ENCODE measurements at regions of chr1 and their contacts with region 1.

Region 1: DNA sequence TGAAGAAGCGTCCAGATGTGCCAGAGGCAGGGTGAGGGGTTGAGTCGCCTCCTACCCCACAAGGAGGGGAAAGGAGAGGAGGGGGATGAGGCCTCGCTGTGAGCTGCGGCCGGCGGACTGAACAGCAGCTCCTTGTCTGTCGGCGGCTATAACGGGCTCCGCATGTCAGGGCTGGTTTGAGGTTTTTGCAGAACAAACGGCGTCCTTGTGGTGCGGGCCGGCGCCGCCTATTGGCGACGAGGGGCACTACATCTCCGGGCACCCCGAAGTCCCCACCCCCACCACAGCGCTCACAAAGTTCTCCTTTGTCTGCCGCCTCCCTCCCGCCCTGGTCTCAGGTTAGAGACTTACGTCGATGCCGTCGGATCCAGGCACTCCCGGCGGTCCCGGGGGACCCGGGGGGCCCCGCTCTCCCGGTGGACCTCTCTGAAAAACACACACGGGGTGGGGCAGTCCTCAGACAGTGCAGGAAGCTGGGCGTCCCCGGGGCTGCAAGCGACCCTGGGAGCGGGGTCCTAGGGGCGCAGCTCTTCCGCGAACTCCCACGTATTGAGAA is 1.8 kb downstream of the COL9A2 start:
- DNase-seq: peak; percentile 90
- H3K4me3 ChIP-seq: peak overlapping the region; percentile 15 to 55 (median 48)
- H3K27ac ChIP-seq: peak overlapping the region in 3 of 4 donors; percentile 37 to 65 (median 50)
- H3K4me1 ChIP-seq: peaks cover 0 to 31% (median 26%) of the 10 kb centered on the region in 4 donors
- H3K27me3 ChIP-seq: peaks cover 16 to 47% (median 26%) of the 10 kb centered on the region in 3 donors
- CTCF ChIP-seq: peak; percentile 77 to 92 (median 83)
- EP300 ChIP-seq: no peak
- POLR2A ChIP-seq: no peak

Region 2: GRCh38 chr1:40153073-40153770 is 162.1 kb before region 1 on chr1:
- intact Hi-C with region 1: loop called (anchors 2 kb)
- DNase-seq: no peak
- H3K4me3 ChIP-seq: no peak overlapping the region
- H3K27ac ChIP-seq: no peak overlapping the region
- H3K4me1 ChIP-seq: peaks cover 0 to 4% (median 2%) of the 10 kb centered on the region in 4 donors
- H3K27me3 ChIP-seq: no peaks in the 10 kb centered on the region
- CTCF ChIP-seq: peak in 3 of 4 experiments; percentile 39 to 67 (median 50)
- EP300 ChIP-seq: no peak
- POLR2A ChIP-seq: no peak

Region 3: GRCh38 chr1:40161125-40161887 is 154.0 kb before region 1 on chr1 and contains the start of gene RLF:
- intact Hi-C with region 1: loop called (anchors 2 kb)
- DNase-seq: peak; percentile 98
- H3K4me3 ChIP-seq: peak within 1 kb of the TSS; percentile 69 to 97 (median 84)
- H3K27ac ChIP-seq: peak within 1 kb of the TSS; percentile 92 to 97 (median 94)
- H3K4me1 ChIP-seq: peaks cover 0 to 44% (median 35%) of the 10 kb centered on the region in 4 donors
- H3K27me3 ChIP-seq: no peaks in the 10 kb centered on the region
- CTCF ChIP-seq: peak in 1 of 4 experiments; percentile 8
- EP300 ChIP-seq: peak in 1 of 4 donors; percentile 89
- POLR2A ChIP-seq: peak; percentile 88 to 94
- total RNA-seq, gene RLF: 19.9 to 27.6 (median 23.4) TPM